MCF 10A (cell line): ENCODE measurements at regions of chr11 and their contacts with region 1.

Region 1: GRCh38 chr11:4551346-4551979 is 6.5 kb downstream of the OR52M1 start:
- DNase-seq: peak; percentile 25
- H3K4me3 Mint-ChIP-seq: no peak overlapping the region
- H3K27ac Mint-ChIP-seq: no peak overlapping the region
- H3K4me1 Mint-ChIP-seq: no peaks in the 10 kb centered on the region
- H3K27me3 Mint-ChIP-seq: no peaks in the 10 kb centered on the region
- CTCF ChIP-seq: peak; percentile 31

Region 2: GRCh38 chr11:3205261-3206135 is 1346.0 kb before region 1 on chr11:
- CTCF ChIA-PET with region 1: no interaction called
- POLR2A ChIA-PET with region 1: no interaction called
- intact Hi-C with region 1: no loop called
- DNase-seq: no peak
- H3K4me3 Mint-ChIP-seq: no peak overlapping the region
- H3K27ac Mint-ChIP-seq: no peak overlapping the region
- H3K4me1 Mint-ChIP-seq: no peaks in the 10 kb centered on the region
- H3K27me3 Mint-ChIP-seq: peaks cover 25% of the 10 kb centered on the region
- CTCF ChIP-seq: no peak

Region 3: GRCh38 chr11:4181782-4182721 is 369.4 kb before region 1 on chr11:
- CTCF ChIA-PET with region 1: interaction called, 22 read pairs
- POLR2A ChIA-PET with region 1: no interaction called
- intact Hi-C with region 1: loop called (anchors 1 kb)
- DNase-seq: peak; percentile 71
- H3K4me3 Mint-ChIP-seq: no peak overlapping the region
- H3K27ac Mint-ChIP-seq: no peak overlapping the region
- H3K4me1 Mint-ChIP-seq: no peaks in the 10 kb centered on the region
- H3K27me3 Mint-ChIP-seq: no peaks in the 10 kb centered on the region
- CTCF ChIP-seq: peak; percentile 88

Region 4: DNA sequence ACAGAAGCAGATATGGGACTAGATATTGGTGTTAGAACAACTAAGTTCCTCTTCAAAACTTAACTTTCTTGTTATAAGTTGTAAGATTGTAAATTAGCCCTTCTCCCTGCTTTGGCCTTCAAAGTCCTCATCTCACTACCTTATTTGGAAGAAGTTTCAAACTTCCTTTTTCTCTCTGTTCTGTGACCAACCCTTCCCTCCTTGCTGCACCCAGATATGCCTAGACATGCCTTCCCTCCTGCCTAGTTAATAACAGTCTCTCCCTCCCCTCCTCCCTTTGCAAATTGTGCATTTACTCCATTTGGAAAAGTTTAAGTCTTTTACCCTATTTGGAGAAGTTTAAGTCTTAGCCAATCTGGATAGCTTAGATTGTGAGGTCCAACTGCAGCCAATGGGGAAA is 97.4 kb before region 1 on chr11:
- CTCF ChIA-PET with region 1: no interaction called
- POLR2A ChIA-PET with region 1: no interaction called
- intact Hi-C with region 1: no loop called
- DNase-seq: peak; percentile 30
- H3K4me3 Mint-ChIP-seq: no peak overlapping the region
- H3K27ac Mint-ChIP-seq: no peak overlapping the region
- H3K4me1 Mint-ChIP-seq: peaks cover 6% of the 10 kb centered on the region
- H3K27me3 Mint-ChIP-seq: no peaks in the 10 kb centered on the region
- CTCF ChIP-seq: no peak

Region 5: DNA sequence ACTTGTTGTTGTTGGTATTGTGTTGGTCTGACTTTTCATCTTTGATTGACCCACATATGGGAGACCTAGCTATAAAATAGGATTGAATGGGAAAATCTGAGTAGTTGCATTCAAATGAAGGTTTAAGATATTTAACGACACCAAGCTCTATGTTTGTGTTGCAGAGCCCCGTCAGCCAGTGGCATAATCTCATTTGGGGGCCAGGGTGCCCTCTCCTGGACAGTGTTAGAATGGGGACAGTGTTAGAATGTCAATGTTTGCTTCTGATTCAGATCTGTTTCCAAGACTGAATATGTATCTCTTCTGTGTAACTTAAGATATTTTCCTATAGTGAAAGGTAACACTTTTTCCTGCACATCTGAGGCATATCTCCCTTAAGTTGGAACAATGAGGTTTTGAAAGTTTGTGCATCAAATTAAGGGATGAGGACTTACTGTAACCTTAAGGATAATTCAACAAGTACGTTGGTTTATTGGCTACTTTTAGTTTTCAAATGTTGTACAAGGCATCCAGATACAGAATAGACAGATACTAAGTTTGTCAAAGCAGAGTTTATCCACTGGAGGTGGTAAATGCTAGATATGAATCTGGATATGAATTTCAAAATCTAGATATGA is 11.8 kb before region 1 on chr11:
- CTCF ChIA-PET with region 1: interaction called, 10 read pairs
- POLR2A ChIA-PET with region 1: no interaction called
- intact Hi-C with region 1: no loop called
- DNase-seq: peak; percentile 65
- H3K4me3 Mint-ChIP-seq: no peak overlapping the region
- H3K27ac Mint-ChIP-seq: no peak overlapping the region
- H3K4me1 Mint-ChIP-seq: peaks cover 10% of the 10 kb centered on the region
- H3K27me3 Mint-ChIP-seq: no peaks in the 10 kb centered on the region
- CTCF ChIP-seq: peak; percentile 65

Region 6: GRCh38 chr11:4851033-4851432 is 299.6 kb after region 1 on chr11:
- CTCF ChIA-PET with region 1: no interaction called
- POLR2A ChIA-PET with region 1: no interaction called
- intact Hi-C with region 1: no loop called
- DNase-seq: no peak
- H3K4me3 Mint-ChIP-seq: no peak overlapping the region
- H3K27ac Mint-ChIP-seq: no peak overlapping the region
- H3K4me1 Mint-ChIP-seq: no peaks in the 10 kb centered on the region
- H3K27me3 Mint-ChIP-seq: peaks cover 18% of the 10 kb centered on the region
- CTCF ChIP-seq: no peak